H1 (cell line): ENCODE measurements at regions of chr11 and their contacts with region 1.

Region 1: DNA sequence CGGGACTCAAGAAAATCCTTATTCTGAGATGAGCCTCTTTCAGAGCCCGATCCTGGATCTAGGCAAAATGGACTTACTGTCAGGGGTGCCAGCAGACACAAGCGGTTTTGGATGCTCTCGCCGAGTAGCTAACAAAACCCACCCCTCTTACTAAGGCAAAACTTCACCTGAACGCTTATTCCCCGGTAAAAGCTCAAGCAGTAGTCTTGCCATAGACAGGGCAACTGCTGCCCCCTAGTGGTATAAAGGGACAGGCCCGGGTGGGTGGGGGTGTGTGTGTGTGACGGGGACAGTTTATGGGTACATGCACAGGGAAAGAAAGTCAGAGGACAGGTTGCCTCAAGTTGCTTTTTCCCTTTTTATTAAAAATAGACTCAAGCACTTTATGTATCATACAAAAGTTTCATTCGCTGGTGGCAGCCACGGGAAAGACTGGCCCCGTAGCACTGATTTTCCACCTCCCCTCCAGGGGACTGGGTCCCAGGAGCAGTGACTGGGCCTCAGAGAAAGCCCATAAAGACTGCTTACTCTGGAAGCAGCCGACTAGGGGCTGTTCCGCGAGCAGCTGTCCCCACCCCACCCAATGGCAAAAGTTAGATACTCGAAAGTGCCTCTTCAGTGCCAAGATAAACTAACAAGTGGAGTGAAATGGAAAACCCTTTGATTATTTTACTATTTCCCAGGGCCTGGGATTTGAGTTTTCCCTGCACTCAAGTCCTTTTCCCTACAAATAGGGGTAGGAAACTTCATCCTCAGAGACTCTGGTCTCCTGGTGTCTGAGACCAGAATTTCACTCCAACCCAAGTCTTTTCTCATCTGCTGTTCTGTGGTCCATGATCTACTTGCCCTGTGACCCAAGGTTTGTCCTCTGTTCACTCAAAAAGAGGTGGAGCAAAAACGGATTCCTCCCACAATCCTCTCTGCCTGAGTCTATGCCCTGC is 4.7 kb downstream of the YPEL4 start:
- DNase-seq: peak in 1 of 2 experiments; percentile 93
- H3K4me3 ChIP-seq: no peak overlapping the region; a peak in 1 of 8 replicates
- H3K27ac ChIP-seq: no peak overlapping the region
- H3K4me1 ChIP-seq: peaks cover 34 to 65% (median 44%) of the 10 kb centered on the region in 4 experiments
- H3K27me3 ChIP-seq: no peaks in the 10 kb centered on the region
- CTCF ChIP-seq: peak; percentile 79 to 89 (median 85)
- EP300 ChIP-seq: no peak
- POLR2A ChIP-seq: peak; percentile 28 to 72
- RAD21 ChIP-seq: peak; percentile 81 to 92

Region 2: DNA sequence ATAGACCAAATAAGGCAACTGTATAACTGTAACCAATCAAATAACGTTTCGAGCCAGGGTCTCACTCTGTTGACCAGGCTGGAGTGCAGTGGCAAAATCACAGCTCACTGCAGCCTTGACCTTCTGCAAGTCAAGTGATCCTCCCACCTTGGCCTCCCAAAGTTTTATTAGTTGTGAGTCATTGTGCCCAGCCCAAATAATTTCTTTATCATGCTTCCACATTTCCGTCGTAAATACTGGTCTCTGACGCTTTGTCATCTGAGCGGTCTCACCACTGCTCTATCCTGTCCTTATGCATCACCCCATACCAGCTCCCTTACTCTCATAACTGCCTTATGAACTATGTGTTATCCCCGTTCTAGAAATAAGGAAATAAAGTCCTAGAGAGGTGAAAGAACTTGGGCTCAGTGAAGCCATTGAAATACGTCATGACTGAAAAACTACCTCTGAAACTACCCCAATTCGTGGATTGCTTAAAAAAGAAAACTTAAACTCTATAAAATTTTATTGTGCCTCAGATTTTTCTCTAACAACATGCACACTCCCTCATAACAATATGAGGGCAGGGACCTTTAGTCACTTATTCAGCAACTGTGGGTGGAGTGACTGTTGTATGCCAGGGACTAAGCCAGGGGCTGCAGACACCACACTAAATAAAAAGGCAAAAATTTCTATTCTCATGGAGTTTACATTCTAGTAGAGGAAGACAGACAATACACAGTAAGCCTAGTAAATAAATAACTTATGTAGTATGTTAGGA is 200.5 kb before region 1 on chr11:
- CTCF ChIA-PET with region 1: no interaction called
- POLR2A ChIA-PET with region 1: no interaction called
- DNase-seq: no peak
- H3K4me3 ChIP-seq: no peak overlapping the region
- H3K27ac ChIP-seq: no peak overlapping the region
- H3K4me1 ChIP-seq: no peaks in the 10 kb centered on the region
- H3K27me3 ChIP-seq: no peaks in the 10 kb centered on the region; a peak in 1 of 7 replicates
- CTCF ChIP-seq: no peak
- EP300 ChIP-seq: no peak
- POLR2A ChIP-seq: no peak
- RAD21 ChIP-seq: no peak

Region 3: DNA sequence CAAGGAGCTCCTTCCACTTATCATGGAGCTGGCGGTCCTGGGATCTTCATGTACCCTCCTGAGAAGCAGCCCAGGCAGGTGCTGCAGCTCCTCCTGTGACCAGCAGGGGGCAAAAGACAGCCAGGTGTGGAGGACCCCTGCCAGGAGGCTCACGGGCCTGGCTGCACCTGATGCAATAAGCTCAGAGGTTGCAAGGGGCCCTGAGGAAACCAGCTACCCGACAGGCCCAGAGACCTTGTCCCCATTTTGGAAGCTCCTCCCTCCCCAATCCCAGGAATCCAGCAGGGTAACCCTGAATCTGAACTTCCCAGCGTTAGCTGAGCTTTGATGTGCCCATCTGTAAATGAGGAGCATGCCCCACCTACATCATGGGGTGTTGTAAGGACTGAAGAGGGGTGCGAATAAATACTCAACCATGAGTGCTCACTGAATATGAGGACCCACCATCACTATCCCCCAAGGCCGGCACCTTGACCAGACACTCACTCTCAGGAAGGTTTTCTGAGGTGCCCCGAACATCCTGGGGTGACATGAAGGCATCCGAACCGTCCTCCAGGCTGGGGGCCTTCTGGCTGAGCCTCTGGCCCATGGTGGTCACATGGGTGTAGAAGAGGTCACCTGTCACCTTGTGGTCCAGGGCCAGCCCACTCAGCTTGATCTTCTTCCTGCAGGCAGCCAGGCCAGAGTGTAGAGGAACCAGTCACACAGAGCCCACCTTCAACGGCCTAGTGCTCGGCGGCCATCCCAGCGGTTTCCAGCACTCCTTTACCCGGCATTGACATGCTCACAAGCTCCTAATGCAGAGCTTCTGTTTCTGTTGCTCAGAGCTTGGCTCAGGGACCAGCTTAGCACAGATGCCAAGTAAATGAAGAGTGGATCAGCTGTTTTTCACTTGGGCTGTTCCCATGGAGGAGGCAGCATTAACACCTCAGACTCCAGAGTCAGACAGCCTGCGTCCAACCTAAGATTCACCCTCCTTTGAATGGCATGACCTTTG is 151.2 kb before region 1 on chr11:
- CTCF ChIA-PET with region 1: interaction called, 15 read pairs
- POLR2A ChIA-PET with region 1: interaction called, 26 read pairs
- DNase-seq: peak; percentile 88 to 93
- H3K4me3 ChIP-seq: no peak overlapping the region
- H3K27ac ChIP-seq: peak overlapping the region; percentile 88
- H3K4me1 ChIP-seq: peaks cover 0 to 7% (median 5%) of the 10 kb centered on the region in 4 experiments; a peak in 4 of 7 replicates
- H3K27me3 ChIP-seq: no peaks in the 10 kb centered on the region
- CTCF ChIP-seq: peak; percentile 81 to 90 (median 87)
- EP300 ChIP-seq: peak in 1 of 2 experiments; percentile 81; a peak in 1 of 3 replicates
- POLR2A ChIP-seq: peak in 1 of 2 experiments; percentile 36; a peak in 1 of 3 replicates
- RAD21 ChIP-seq: peak; percentile 63 to 74

Region 4: DNA sequence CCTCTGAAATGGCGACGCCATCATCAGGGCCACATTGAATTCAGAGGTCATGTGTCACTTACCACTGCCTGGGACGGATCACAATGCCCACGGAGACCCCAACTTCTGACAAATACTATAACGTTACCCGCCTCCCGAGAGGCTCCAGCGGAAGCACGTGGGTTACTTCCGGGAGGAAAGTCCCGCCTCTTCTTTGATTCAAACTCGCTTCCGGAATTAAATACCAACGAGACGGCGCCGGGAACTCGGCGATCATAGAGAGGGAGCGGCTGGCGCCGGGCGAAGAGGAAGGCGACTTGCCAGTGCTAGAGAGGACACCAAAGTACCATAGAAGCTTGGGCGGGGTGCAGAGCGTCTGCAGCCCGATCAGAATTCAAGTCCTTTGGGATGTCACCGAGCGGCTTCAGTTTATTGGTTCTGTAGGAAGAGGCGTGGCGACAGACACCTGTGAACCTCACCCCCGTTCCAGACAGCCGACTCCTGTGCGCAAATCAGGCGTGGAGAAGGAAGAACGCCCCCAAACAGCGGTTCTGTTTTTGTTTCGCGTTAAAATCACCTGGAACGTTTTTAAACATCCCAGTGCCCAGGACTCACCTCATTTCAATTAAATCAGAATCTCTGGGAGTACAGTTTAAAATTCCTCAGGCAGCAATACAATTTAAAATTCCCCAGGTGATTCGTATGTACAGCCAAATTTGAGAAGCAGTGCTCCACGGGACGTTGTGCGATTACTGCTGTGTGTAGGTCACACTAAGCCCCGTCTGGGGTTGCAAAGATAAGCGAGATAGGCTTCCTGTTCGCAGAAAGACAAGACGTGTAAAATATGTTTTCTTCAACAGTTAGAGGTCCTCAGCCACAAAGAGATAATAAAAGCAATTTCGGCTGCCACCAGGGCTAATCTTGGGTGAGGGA is 114.2 kb before region 1 on chr11 and contains the start of gene TIMM10:
- CTCF ChIA-PET with region 1: interaction called, 15 read pairs
- POLR2A ChIA-PET with region 1: interaction called, 32 read pairs
- DNase-seq: peak; percentile 87 to 98
- H3K4me3 ChIP-seq: peak within 1 kb of the TSS; percentile 88 to 99 (median 96)
- H3K27ac ChIP-seq: peak within 1 kb of the TSS; percentile 49
- H3K4me1 ChIP-seq: peaks cover 0 to 7% (median 3%) of the 10 kb centered on the region in 4 experiments; a peak in 4 of 7 replicates
- H3K27me3 ChIP-seq: no peaks in the 10 kb centered on the region
- CTCF ChIP-seq: no peak
- EP300 ChIP-seq: peak in 1 of 2 experiments; percentile 26; a peak in 1 of 3 replicates
- POLR2A ChIP-seq: peak in 1 of 2 experiments; percentile 65; a peak in 1 of 3 replicates
- RAD21 ChIP-seq: peak in 1 of 2 experiments; percentile 13; a peak in 1 of 4 replicates
- total RNA-seq, gene TIMM10: 109 and 117 TPM in 2 replicates

Region 5: GRCh38 chr11:57556061-57556460 is 89.0 kb before region 1 on chr11:
- CTCF ChIA-PET with region 1: interaction called, 11 read pairs
- POLR2A ChIA-PET with region 1: interaction called, 95 read pairs
- DNase-seq: no peak
- H3K4me3 ChIP-seq: no peak overlapping the region
- H3K27ac ChIP-seq: no peak overlapping the region
- H3K4me1 ChIP-seq: peaks cover 0 to 3% (median 2%) of the 10 kb centered on the region in 4 experiments; a peak in 2 of 7 replicates
- H3K27me3 ChIP-seq: no peaks in the 10 kb centered on the region
- CTCF ChIP-seq: no peak
- EP300 ChIP-seq: no peak
- POLR2A ChIP-seq: no peak
- RAD21 ChIP-seq: no peak

Region 6: DNA sequence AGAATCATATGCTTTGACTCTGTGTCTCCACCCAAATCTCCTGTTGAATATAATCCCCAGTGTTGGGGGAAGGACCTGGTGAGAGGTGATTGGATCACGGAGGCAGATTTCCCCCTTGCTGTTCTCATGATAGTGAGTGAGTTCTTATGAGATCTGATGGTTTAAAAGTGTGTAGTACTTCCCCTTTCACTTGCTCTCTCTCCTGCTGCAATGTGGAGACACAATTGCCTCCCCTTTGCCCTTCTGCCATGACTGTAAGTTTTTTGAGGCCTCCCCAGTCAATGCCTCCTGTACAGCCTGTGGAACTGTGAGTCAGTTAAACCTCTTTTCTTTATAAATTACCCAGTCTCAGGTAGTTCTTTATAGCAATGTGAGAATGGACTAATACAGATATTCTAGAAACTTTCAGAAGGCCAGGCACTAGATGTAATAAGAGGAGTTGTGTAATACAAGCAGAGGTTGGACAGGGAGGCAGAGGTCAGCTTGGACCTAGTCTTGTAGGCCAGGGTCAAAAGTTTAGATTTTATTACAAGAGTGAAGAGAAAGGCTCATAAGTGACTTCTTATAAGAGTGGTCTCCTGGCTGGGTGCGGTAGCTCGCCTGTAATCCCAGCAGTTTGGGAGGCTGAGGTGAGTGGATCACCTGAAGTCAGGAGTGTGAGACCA is 56.8 kb before region 1 on chr11:
- CTCF ChIA-PET with region 1: interaction called, 286 read pairs
- POLR2A ChIA-PET with region 1: interaction called, 1,546 read pairs
- DNase-seq: no peak
- H3K4me3 ChIP-seq: no peak overlapping the region
- H3K27ac ChIP-seq: no peak overlapping the region
- H3K4me1 ChIP-seq: no peaks in the 10 kb centered on the region
- H3K27me3 ChIP-seq: no peaks in the 10 kb centered on the region
- CTCF ChIP-seq: no peak
- EP300 ChIP-seq: no peak
- POLR2A ChIP-seq: no peak
- RAD21 ChIP-seq: no peak

Region 7: GRCh38 chr11:57632116-57632515 is 12.9 kb before region 1 on chr11:
- CTCF ChIA-PET with region 1: interaction called, 129 read pairs
- POLR2A ChIA-PET with region 1: interaction called, 1,546 read pairs
- DNase-seq: no peak
- H3K4me3 ChIP-seq: no peak overlapping the region
- H3K27ac ChIP-seq: no peak overlapping the region
- H3K4me1 ChIP-seq: peaks cover under 1 to 4% (median under 1%) of the 10 kb centered on the region in 4 experiments
- H3K27me3 ChIP-seq: no peaks in the 10 kb centered on the region; a peak in 1 of 7 replicates
- CTCF ChIP-seq: no peak
- EP300 ChIP-seq: no peak
- POLR2A ChIP-seq: no peak
- RAD21 ChIP-seq: no peak